ENCODE measurements at regions of chr9 and their contacts with region 1.

Region 1: GRCh38 chr9:133149126-133150107 is 14.3 kb downstream of the GBGT1 start:
- DNase-seq: peak; percentile 88
- ATAC-seq: peak; percentile 71
- H3K4me3 ChIP-seq: peak overlapping the region; percentile 74
- H3K27ac ChIP-seq: peak overlapping the region; percentile 4; the same call in 1 of the 2 replicates
- H3K4me1 ChIP-seq: peaks cover 11% of the 10 kb centered on the region; the same call in 1 of the 2 replicates
- H3K27me3 ChIP-seq: no peaks in the 10 kb centered on the region
- CTCF ChIP-seq: 0 out of 2 replicates have a peak, but pooled peaks have one; percentile 18
- POLR2A ChIP-seq: no peak
- RAD21 ChIP-seq: peak; percentile 30

Region 2: GRCh38 chr9:132973713-132974112 is 175.7 kb before region 1 on chr9:
- CTCF ChIA-PET with region 1: no interaction called
- POLR2A ChIA-PET with region 1: no interaction called
- dilution Hi-C with region 1: no loop called
- in situ Hi-C with region 1: no loop called
- intact Hi-C with region 1: loop called (anchors 1 kb)
- DNase-seq: peak; percentile 18
- ATAC-seq: no peak; the same call in 1 of the 2 replicates
- H3K4me3 ChIP-seq: no peak overlapping the region
- H3K27ac ChIP-seq: no peak overlapping the region
- H3K4me1 ChIP-seq: no peaks in the 10 kb centered on the region
- H3K27me3 ChIP-seq: peaks cover 51% of the 10 kb centered on the region
- CTCF ChIP-seq: no peak
- POLR2A ChIP-seq: no peak
- RAD21 ChIP-seq: no peak

Region 3: GRCh38 chr9:133041958-133042357 is 107.5 kb before region 1 on chr9:
- CTCF ChIA-PET with region 1: interaction called, 4 read pairs
- POLR2A ChIA-PET with region 1: no interaction called
- dilution Hi-C with region 1: no loop called
- in situ Hi-C with region 1: loop called (anchors 5 kb)
- intact Hi-C with region 1: loop called (anchors 1 kb)
- DNase-seq: no peak
- ATAC-seq: no peak
- H3K4me3 ChIP-seq: no peak overlapping the region
- H3K27ac ChIP-seq: no peak overlapping the region
- H3K4me1 ChIP-seq: no peaks in the 10 kb centered on the region
- H3K27me3 ChIP-seq: no peaks in the 10 kb centered on the region
- CTCF ChIP-seq: no peak
- POLR2A ChIP-seq: no peak
- RAD21 ChIP-seq: no peak

Region 4: GRCh38 chr9:133048569-133048968 is 100.8 kb before region 1 on chr9:
- CTCF ChIA-PET with region 1: interaction called, 4 read pairs
- POLR2A ChIA-PET with region 1: no interaction called
- dilution Hi-C with region 1: no loop called
- in situ Hi-C with region 1: loop called (anchors 5 kb)
- intact Hi-C with region 1: no loop called
- DNase-seq: peak; percentile 11
- ATAC-seq: peak; percentile 85
- H3K4me3 ChIP-seq: no peak overlapping the region
- H3K27ac ChIP-seq: no peak overlapping the region
- H3K4me1 ChIP-seq: no peaks in the 10 kb centered on the region
- H3K27me3 ChIP-seq: no peaks in the 10 kb centered on the region
- CTCF ChIP-seq: peak; percentile 37; the same call in 1 of the 2 replicates
- POLR2A ChIP-seq: no peak
- RAD21 ChIP-seq: peak; percentile 47

Region 5: DNA sequence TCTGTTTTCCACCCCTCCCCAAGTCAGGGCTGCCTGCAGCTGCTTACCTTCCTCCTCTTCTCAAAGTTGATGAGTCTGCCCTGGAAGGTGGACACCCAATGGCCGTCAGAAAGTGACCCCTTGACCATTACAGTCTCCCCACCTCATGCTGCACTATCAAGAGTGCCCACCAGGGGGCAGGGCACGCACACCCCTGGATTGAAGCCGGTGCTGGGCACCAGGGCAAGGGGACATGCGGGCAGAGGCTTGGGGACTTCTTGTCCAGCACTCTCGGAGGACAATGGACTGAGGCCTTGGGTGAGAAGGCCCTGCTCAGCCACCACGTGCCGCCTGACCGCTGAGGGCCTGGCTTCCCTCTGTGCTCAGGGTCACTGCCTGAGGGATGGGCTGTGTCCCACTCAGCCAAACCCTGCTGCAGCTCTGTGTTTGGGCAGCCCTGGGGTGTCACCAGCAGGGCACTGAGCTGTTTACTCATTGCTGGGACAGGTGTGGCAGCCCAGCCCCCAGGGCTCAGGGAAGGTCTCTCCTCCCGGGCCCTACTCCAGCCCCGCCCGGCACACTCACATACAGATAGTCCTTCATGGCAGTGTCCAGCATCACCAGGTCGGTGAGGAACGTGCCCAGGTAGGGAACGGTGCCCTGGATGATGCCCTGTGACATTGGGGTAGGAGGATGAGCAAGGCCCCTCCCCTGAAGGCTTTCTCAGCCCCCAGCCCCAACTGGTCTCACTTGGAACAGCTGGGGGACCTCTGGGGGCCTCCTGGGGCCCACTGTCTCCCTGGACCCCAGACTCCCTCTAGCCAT is 46.0 kb before region 1 on chr9:
- CTCF ChIA-PET with region 1: interaction called, 16 read pairs
- POLR2A ChIA-PET with region 1: no interaction called
- dilution Hi-C with region 1: no loop called
- in situ Hi-C with region 1: loop called (anchors 5 kb)
- intact Hi-C with region 1: loop called (anchors 1 kb)
- DNase-seq: peak; percentile 19
- ATAC-seq: peak; percentile 95
- H3K4me3 ChIP-seq: no peak overlapping the region
- H3K27ac ChIP-seq: no peak overlapping the region
- H3K4me1 ChIP-seq: no peaks in the 10 kb centered on the region
- H3K27me3 ChIP-seq: no peaks in the 10 kb centered on the region
- CTCF ChIP-seq: peak; percentile 88
- POLR2A ChIP-seq: peak; percentile 36; the same call in 1 of the 2 replicates
- RAD21 ChIP-seq: peak; percentile 94

Region 6: GRCh38 chr9:133782157-133783130 is 633.0 kb after region 1 on chr9:
- CTCF ChIA-PET with region 1: no interaction called
- POLR2A ChIA-PET with region 1: no interaction called
- dilution Hi-C with region 1: no loop called
- in situ Hi-C with region 1: no loop called
- intact Hi-C with region 1: no loop called
- DNase-seq: peak; percentile 62
- ATAC-seq: peak; percentile 96
- H3K4me3 ChIP-seq: no peak overlapping the region
- H3K27ac ChIP-seq: no peak overlapping the region
- H3K4me1 ChIP-seq: no peaks in the 10 kb centered on the region
- H3K27me3 ChIP-seq: no peaks in the 10 kb centered on the region
- CTCF ChIP-seq: peak; percentile 84
- POLR2A ChIP-seq: no peak
- RAD21 ChIP-seq: peak; percentile 72

Measured in IMR-90 (cell line).